Activated CD4-positive, alpha-beta T cell treated with anti-CD3 and anti-CD28 coated beads for 36 hours (primary cell): ENCODE measurements at regions of chr11 and their contacts with region 1.

Region 1: DNA sequence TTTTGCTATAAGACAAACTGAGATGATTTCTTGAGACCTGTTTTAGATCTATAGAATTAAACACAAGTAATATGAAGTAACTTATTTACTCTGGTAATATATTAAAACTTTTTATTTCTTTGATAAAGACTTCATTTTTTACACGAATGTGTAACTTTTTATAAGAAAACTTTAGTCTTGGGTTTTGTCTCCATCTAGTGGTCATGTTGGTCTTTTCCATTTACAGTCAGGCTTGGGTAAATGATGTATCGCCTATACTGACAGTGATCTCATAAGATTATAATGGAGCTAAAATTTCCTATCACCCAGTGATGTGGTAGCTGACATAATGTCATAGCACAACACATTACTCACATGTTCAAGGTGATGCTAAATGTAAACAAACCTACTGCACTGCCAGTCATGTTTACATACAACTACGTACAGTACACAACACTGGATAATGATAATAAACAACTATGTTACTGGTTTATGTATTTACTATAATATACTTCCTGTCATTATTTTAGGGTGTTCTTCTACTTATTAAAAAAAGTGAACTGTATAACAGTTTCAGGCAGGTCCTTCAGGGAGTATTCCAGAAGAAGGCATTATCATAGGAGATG is 7.5 kb upstream of the C11orf97 start:
- DNase-seq: no peak
- ATAC-seq: peak; percentile 72
- H3K4me3 Mint-ChIP-seq: no peak overlapping the region
- H3K27ac Mint-ChIP-seq: no peak overlapping the region
- H3K4me1 Mint-ChIP-seq: no peaks in the 10 kb centered on the region
- H3K27me3 Mint-ChIP-seq: peaks cover 3% of the 10 kb centered on the region

Region 2: GRCh38 chr11:92941676-92942571 is 1562.9 kb before region 1 on chr11:
- CTCF ChIA-PET with region 1: no interaction called
- POLR2A ChIA-PET with region 1: no interaction called
- intact Hi-C with region 1: loop called in 1 of 2 experiments (anchors 10 kb)
- DNase-seq: peak; percentile 38
- ATAC-seq: peak; percentile 65
- H3K4me3 Mint-ChIP-seq: no peak overlapping the region
- H3K27ac Mint-ChIP-seq: no peak overlapping the region
- H3K4me1 Mint-ChIP-seq: no peaks in the 10 kb centered on the region
- H3K27me3 Mint-ChIP-seq: peaks cover 19% of the 10 kb centered on the region

Region 3: GRCh38 chr11:93895106-93895862 is 609.5 kb before region 1 on chr11:
- CTCF ChIA-PET with region 1: interaction called, 23 read pairs
- POLR2A ChIA-PET with region 1: no interaction called
- intact Hi-C with region 1: loop called (anchors 1 kb)
- DNase-seq: peak; percentile 19
- ATAC-seq: peak; percentile 64
- H3K4me3 Mint-ChIP-seq: no peak overlapping the region
- H3K27ac Mint-ChIP-seq: no peak overlapping the region
- H3K4me1 Mint-ChIP-seq: no peaks in the 10 kb centered on the region
- H3K27me3 Mint-ChIP-seq: peaks cover 35% of the 10 kb centered on the region

Region 4: DNA sequence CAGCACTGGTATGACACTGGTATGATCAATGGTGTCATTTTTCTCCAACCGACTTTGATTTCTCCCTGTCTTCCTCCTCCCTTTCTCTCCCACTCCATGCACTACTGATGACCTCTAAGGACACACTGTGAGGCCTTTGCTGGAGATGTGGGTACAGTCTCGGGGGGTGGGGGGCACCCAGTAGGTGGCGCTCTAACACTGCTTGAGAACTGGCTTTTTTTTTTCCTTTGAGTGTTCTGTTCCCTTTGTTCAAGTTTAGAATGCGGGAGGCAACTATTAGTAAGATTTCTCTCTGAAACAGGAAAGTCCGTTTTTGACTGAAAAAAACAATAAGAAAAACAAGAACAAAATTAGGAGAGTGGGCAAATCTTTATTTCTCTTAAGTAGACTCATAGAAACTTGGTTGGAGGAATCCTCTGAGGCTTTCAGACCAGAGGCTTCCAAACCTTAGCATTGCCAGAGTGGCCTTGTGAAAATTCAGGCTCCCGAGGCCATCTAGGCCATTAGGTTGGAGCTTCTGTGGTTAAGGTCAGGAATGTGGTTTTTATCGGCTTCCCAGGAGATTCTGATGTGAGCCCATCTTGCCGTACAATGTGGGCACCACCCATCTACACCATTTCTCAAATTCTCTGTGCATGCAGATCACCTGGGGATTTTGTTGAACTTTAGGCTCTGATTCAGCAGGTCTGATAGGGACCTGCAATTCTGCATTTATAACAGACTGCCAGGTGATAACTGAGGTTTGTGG is 332.9 kb before region 1 on chr11:
- CTCF ChIA-PET with region 1: interaction called, 7 read pairs
- POLR2A ChIA-PET with region 1: no interaction called
- intact Hi-C with region 1: loop called (anchors 1 to 2 kb)
- DNase-seq: peak; percentile 70
- ATAC-seq: peak; percentile 47
- H3K4me3 Mint-ChIP-seq: no peak overlapping the region
- H3K27ac Mint-ChIP-seq: no peak overlapping the region
- H3K4me1 Mint-ChIP-seq: peaks cover 14% of the 10 kb centered on the region
- H3K27me3 Mint-ChIP-seq: no peaks in the 10 kb centered on the region

Region 5: DNA sequence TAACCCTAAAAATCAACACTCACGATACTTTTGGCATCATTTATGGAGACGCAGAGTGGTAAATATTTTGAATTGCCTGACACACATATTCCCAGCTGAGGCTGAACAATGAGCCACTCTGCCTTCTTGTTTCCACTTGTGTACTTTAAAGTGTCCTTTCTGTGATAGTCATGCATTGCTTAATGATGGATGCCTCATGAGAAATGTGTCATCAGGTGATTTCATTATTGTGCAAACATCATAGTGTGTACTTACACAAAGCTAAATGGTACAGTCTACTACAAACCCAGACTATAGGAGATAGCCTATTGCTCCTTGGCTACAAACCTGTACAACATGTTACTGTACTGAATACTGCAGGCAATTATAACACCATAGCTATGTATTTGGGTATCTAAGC is 55.4 kb before region 1 on chr11:
- CTCF ChIA-PET with region 1: no interaction called
- POLR2A ChIA-PET with region 1: no interaction called
- intact Hi-C with region 1: no loop called
- DNase-seq: no peak
- ATAC-seq: peak; percentile 39
- H3K4me3 Mint-ChIP-seq: no peak overlapping the region
- H3K27ac Mint-ChIP-seq: no peak overlapping the region
- H3K4me1 Mint-ChIP-seq: no peaks in the 10 kb centered on the region
- H3K27me3 Mint-ChIP-seq: no peaks in the 10 kb centered on the region

Region 6: GRCh38 chr11:94519478-94520084 is 14.8 kb after region 1 on chr11:
- CTCF ChIA-PET with region 1: interaction called, 15 read pairs
- POLR2A ChIA-PET with region 1: no interaction called
- intact Hi-C with region 1: no loop called
- DNase-seq: no peak
- ATAC-seq: peak; percentile 30
- H3K4me3 Mint-ChIP-seq: no peak overlapping the region
- H3K27ac Mint-ChIP-seq: no peak overlapping the region
- H3K4me1 Mint-ChIP-seq: no peaks in the 10 kb centered on the region
- H3K27me3 Mint-ChIP-seq: peaks cover 12% of the 10 kb centered on the region